Ascending aorta (tissue), 2 donors: ENCODE measurements at regions of chr12 and their contacts with region 1.

Region 1: DNA sequence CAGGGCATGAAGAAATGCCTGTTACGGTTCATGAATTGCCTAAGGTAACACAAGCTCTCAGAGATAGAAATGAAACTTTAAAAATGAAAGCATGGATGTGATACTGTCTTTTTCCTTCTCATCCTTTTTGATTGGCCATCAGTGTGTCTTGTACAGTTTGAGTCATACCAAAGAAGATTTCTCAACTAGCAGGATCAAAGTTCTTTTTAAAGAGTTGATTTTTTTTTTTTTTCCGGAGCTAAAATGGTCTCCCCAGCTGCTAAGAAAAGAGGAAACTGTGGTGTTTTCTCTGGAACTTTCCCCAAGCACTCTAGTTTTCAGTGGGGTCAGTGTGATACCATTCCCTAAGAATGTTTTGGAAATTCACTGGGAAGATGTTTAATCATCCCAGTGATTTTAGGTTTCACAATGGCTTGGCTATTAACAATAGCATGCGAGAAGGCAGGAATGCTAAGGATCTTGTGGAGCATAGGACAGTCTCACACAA is 105.0 kb downstream of the ETNK1 start:
- DNase-seq: no peak
- H3K4me3 ChIP-seq: peak overlapping the region in 1 of 2 donors; percentile 3
- H3K27ac ChIP-seq: peak overlapping the region; percentile 62 to 79
- H3K4me1 ChIP-seq: peaks cover 6 to 18% of the 10 kb centered on the region in 2 donors
- H3K27me3 ChIP-seq: no peaks in the 10 kb centered on the region
- CTCF ChIP-seq: no peak

Region 2: GRCh38 chr12:22518067-22518719 is 211.8 kb before region 1 on chr12:
- intact Hi-C with region 1: no loop called
- DNase-seq: no peak
- H3K4me3 ChIP-seq: no peak overlapping the region
- H3K27ac ChIP-seq: no peak overlapping the region
- H3K4me1 ChIP-seq: no peaks in the 10 kb centered on the region
- H3K27me3 ChIP-seq: no peaks in the 10 kb centered on the region
- CTCF ChIP-seq: no peak

Region 3: GRCh38 chr12:22692964-22693555 is 36.9 kb before region 1 on chr12:
- intact Hi-C with region 1: loop called (anchors 5 kb)
- DNase-seq: no peak
- H3K4me3 ChIP-seq: no peak overlapping the region
- H3K27ac ChIP-seq: no peak overlapping the region
- H3K4me1 ChIP-seq: peaks cover 4% of the 10 kb centered on the region in 2 donors
- H3K27me3 ChIP-seq: no peaks in the 10 kb centered on the region
- CTCF ChIP-seq: no peak

Region 4: GRCh38 chr12:22787557-22787956 is 57.6 kb after region 1 on chr12:
- intact Hi-C with region 1: loop called (anchors 5 kb)
- DNase-seq: peak in 1 of 2 donors; percentile 85
- H3K4me3 ChIP-seq: peak overlapping the region; percentile 7 to 34
- H3K27ac ChIP-seq: peak overlapping the region; percentile 63 to 86
- H3K4me1 ChIP-seq: peaks cover 0 to 29% of the 10 kb centered on the region in 2 donors
- H3K27me3 ChIP-seq: no peaks in the 10 kb centered on the region
- CTCF ChIP-seq: no peak

Region 5: GRCh38 chr12:22974865-22975264 is 244.9 kb after region 1 on chr12:
- intact Hi-C with region 1: loop called (anchors 10 kb)
- DNase-seq: no peak
- H3K4me3 ChIP-seq: no peak overlapping the region
- H3K27ac ChIP-seq: no peak overlapping the region
- H3K4me1 ChIP-seq: peaks cover 0 to 3% of the 10 kb centered on the region in 2 donors
- H3K27me3 ChIP-seq: no peaks in the 10 kb centered on the region
- CTCF ChIP-seq: no peak

Region 6: DNA sequence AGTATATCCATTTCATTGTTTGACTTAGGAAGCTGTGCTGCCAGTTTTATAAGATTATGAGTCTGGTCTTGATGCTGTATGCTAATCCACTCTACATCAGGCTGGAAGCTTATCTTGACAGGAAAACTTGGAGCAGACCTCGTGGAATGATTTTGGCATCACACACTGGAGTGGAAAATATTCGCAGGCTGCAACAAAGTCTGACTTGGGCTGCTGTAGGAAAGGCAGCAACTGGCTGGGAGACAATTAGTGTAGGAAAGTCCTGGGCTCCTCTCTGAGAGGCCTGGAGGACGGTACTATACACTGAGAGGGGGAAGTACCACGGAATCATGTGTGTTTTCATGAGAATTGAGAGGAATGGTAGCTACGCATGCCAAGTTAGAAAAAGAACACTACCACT is 278.6 kb after region 1 on chr12:
- intact Hi-C with region 1: loop called (anchors 10 kb)
- DNase-seq: peak in 1 of 2 donors; percentile 71
- H3K4me3 ChIP-seq: no peak overlapping the region
- H3K27ac ChIP-seq: peak overlapping the region; percentile 53 to 57
- H3K4me1 ChIP-seq: peaks cover 3 to 17% of the 10 kb centered on the region in 2 donors
- H3K27me3 ChIP-seq: no peaks in the 10 kb centered on the region
- CTCF ChIP-seq: no peak

Region 7: GRCh38 chr12:23197266-23197665 is 467.3 kb after region 1 on chr12:
- intact Hi-C with region 1: loop called (anchors 10 kb)
- DNase-seq: peak in 1 of 2 donors; percentile 69
- H3K4me3 ChIP-seq: peak overlapping the region; percentile 7 to 22
- H3K27ac ChIP-seq: peak overlapping the region; percentile 76 to 79
- H3K4me1 ChIP-seq: peaks cover 3 to 11% of the 10 kb centered on the region in 2 donors
- H3K27me3 ChIP-seq: no peaks in the 10 kb centered on the region
- CTCF ChIP-seq: no peak

Region 8: DNA sequence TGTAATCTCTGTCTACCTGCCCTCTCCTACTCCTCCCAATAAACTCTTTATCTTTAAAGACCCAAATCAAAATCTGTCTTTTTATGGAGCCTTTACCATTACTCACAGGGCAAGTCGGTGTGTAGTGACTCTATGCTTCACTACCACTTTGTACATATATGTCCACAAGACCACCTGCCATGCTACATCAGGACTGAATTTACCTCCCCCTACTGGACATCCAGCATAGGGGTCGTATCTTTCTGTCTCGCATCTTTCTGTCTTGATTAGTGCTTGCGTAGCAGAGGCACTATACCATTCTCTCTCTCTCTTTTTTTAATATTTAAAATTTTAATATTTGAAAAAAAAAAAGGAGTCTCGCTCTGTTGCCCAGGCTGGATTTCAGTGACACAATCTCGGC is 632.0 kb after region 1 on chr12:
- intact Hi-C with region 1: loop called (anchors 10 kb)
- DNase-seq: no peak
- H3K4me3 ChIP-seq: no peak overlapping the region
- H3K27ac ChIP-seq: peak overlapping the region in 1 of 2 donors; percentile 85
- H3K4me1 ChIP-seq: peaks cover 0 to 22% of the 10 kb centered on the region in 2 donors
- H3K27me3 ChIP-seq: no peaks in the 10 kb centered on the region
- CTCF ChIP-seq: peak in 1 of 3 experiments; percentile 9